CD4-positive, alpha-beta memory T cell (primary cell): ENCODE measurements at regions of chr22 and their contacts with region 1.

Region 1: DNA sequence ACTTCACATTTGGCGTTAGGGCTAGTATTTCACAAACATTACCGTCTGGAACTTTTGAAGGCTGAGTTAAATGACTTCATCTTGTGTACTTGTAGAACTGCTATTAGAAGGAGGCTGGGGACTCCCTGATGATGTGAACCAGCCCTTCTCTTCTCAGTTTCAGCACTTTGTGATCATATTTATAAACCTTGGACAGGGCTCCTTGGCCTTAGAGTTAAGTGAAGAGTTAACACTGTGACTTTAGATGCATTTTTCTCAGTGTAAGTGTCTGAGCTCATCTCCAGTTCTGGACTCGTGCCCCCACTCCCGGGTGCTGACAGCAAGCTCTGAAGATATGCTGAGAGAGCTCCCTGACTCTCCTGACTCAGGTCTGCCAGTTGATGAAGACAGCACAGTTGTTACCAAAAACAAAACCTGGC is 8.4 kb downstream of the MIAT start:
- DNase-seq: no peak
- H3K4me3 ChIP-seq: no peak overlapping the region
- H3K4me3 Mint-ChIP-seq: peak overlapping the region in 1 of 8 donors; percentile 83
- H3K27ac ChIP-seq: peak overlapping the region; percentile 58
- H3K27ac Mint-ChIP-seq: peak overlapping the region; percentile 65 to 93 (median 88)
- H3K4me1 ChIP-seq: peaks cover 46% of the 10 kb centered on the region
- H3K4me1 Mint-ChIP-seq: peaks cover 29 to 57% (median 42%) of the 10 kb centered on the region in 4 donors
- H3K27me3 ChIP-seq: no peaks in the 10 kb centered on the region
- H3K27me3 Mint-ChIP-seq: no peaks in the 10 kb centered on the region

Region 2: GRCh38 chr22:25509374-25509791 is 1156.4 kb before region 1 on chr22:
- CTCF ChIA-PET with region 1: no interaction called
- POLR2A ChIA-PET with region 1: no interaction called
- intact Hi-C with region 1: no loop called
- DNase-seq: no peak
- H3K4me3 ChIP-seq: no peak overlapping the region
- H3K4me3 Mint-ChIP-seq: no peak overlapping the region
- H3K27ac ChIP-seq: no peak overlapping the region
- H3K27ac Mint-ChIP-seq: no peak overlapping the region
- H3K4me1 ChIP-seq: no peaks in the 10 kb centered on the region
- H3K4me1 Mint-ChIP-seq: no peaks in the 10 kb centered on the region
- H3K27me3 ChIP-seq: no peaks in the 10 kb centered on the region
- H3K27me3 Mint-ChIP-seq: no peaks in the 10 kb centered on the region

Region 3: DNA sequence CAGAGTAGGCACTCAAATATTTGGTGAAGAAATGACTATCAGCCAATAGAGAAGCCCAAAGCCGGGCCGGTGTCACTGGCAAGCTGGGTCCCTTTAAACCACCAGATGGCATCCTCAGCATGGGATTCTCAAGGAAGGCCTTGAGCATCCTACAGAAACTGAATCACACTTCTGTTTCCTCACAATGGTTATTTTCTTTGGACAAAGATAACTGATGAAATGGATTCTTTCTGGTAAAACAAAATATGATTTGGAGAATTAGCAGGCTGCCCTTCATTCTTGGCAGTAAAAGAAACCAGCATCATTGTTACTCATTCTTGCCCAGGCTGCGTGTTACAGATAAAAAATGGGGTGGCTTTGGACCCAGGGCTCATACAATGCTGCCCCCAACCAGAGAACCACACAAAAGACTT is 267.1 kb before region 1 on chr22:
- CTCF ChIA-PET with region 1: interaction called, 8 read pairs
- POLR2A ChIA-PET with region 1: no interaction called
- intact Hi-C with region 1: loop called (anchors 1 kb)
- DNase-seq: peak; percentile 36 to 56 (median 46)
- H3K4me3 ChIP-seq: no peak overlapping the region
- H3K4me3 Mint-ChIP-seq: no peak overlapping the region
- H3K27ac ChIP-seq: no peak overlapping the region
- H3K27ac Mint-ChIP-seq: no peak overlapping the region
- H3K4me1 ChIP-seq: no peaks in the 10 kb centered on the region
- H3K4me1 Mint-ChIP-seq: no peaks in the 10 kb centered on the region
- H3K27me3 ChIP-seq: no peaks in the 10 kb centered on the region
- H3K27me3 Mint-ChIP-seq: peaks cover 5 to 6% of the 10 kb centered on the region in 2 donors

Region 4: GRCh38 chr22:26502688-26503561 is 162.9 kb before region 1 on chr22:
- CTCF ChIA-PET with region 1: interaction called, 32 read pairs
- POLR2A ChIA-PET with region 1: interaction called, 6 read pairs
- intact Hi-C with region 1: loop called (anchors 1 kb)
- DNase-seq: peak; percentile 57 to 69 (median 65)
- H3K4me3 ChIP-seq: no peak overlapping the region
- H3K4me3 Mint-ChIP-seq: peak overlapping the region in 7 of 8 donors; percentile 13 to 76 (median 49)
- H3K27ac ChIP-seq: no peak overlapping the region
- H3K27ac Mint-ChIP-seq: peak overlapping the region; percentile 57 to 93 (median 79)
- H3K4me1 ChIP-seq: peaks cover 22% of the 10 kb centered on the region
- H3K4me1 Mint-ChIP-seq: peaks cover 17 to 27% (median 23%) of the 10 kb centered on the region in 4 donors
- H3K27me3 ChIP-seq: no peaks in the 10 kb centered on the region
- H3K27me3 Mint-ChIP-seq: no peaks in the 10 kb centered on the region

Region 5: DNA sequence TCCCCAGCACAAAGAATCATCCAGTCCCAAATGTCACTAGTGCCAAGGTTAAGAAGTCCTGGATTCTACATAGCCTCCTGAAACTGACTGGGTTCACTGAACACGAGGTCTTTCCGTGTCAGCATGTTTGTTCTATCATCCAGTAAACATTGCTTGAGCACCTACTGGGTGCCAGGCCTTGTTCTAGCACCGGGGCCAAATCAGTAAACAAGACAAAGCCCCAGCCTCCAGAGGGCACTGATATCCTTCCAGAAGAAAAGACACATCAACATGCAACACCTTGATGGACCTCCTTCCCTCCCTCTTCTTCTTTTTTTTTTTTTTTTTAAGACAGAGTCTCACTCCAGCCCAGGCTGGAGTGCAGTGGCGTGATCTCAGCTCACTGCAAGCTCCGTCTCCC is 102.8 kb before region 1 on chr22:
- CTCF ChIA-PET with region 1: interaction called, 6 read pairs
- POLR2A ChIA-PET with region 1: no interaction called
- intact Hi-C with region 1: loop called (anchors 1 kb)
- DNase-seq: peak in 1 of 5 donors; percentile 21
- H3K4me3 ChIP-seq: no peak overlapping the region
- H3K4me3 Mint-ChIP-seq: no peak overlapping the region
- H3K27ac ChIP-seq: no peak overlapping the region
- H3K27ac Mint-ChIP-seq: peak overlapping the region in 3 of 7 donors; percentile 51 to 82 (median 72)
- H3K4me1 ChIP-seq: peaks cover 13% of the 10 kb centered on the region
- H3K4me1 Mint-ChIP-seq: peaks cover 7 to 39% (median 24%) of the 10 kb centered on the region in 4 donors
- H3K27me3 ChIP-seq: no peaks in the 10 kb centered on the region
- H3K27me3 Mint-ChIP-seq: no peaks in the 10 kb centered on the region

Region 6: GRCh38 chr22:26599505-26599904 is 66.3 kb before region 1 on chr22:
- CTCF ChIA-PET with region 1: no interaction called
- POLR2A ChIA-PET with region 1: no interaction called
- intact Hi-C with region 1: no loop called
- DNase-seq: no peak
- H3K4me3 ChIP-seq: no peak overlapping the region
- H3K4me3 Mint-ChIP-seq: no peak overlapping the region
- H3K27ac ChIP-seq: no peak overlapping the region
- H3K27ac Mint-ChIP-seq: no peak overlapping the region
- H3K4me1 ChIP-seq: peaks cover 4% of the 10 kb centered on the region
- H3K4me1 Mint-ChIP-seq: peaks cover 0 to 11% (median 4%) of the 10 kb centered on the region in 4 donors
- H3K27me3 ChIP-seq: no peaks in the 10 kb centered on the region
- H3K27me3 Mint-ChIP-seq: no peaks in the 10 kb centered on the region

Region 7: DNA sequence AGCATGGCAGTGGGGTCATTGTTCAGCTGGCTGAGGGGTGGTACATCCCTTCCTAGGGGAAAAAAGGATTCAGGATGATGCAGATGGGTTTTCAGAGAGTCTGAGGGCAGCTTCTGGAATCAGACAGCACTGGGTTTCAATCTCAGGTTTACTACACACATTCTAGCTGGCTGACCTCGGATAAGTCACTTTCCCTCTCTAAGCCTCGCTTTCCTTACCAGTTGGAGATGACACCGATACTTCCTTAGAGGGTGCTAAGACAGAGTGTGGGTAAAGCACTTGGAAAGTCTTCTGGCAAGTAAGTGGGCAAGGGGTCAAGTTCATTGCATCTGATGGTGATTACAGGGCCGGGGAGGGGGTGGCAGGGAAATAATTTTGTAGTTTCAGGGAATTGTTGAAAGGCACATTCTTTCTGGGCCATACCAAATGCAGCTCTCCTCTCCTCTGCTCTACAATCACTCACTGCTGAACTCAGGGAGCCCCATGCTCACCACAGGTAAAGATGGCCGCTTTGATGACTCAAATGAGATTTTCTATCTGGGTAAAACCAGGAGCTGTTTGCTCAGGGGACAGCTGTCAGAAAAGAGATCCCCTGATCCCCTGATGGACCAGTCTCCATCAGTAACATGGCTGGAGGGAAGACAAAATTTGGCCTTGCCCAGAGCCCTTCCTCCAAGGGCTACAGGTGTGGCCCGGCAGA is 14.9 kb before region 1 on chr22:
- CTCF ChIA-PET with region 1: no interaction called
- POLR2A ChIA-PET with region 1: no interaction called
- intact Hi-C with region 1: no loop called
- DNase-seq: no peak
- H3K4me3 ChIP-seq: no peak overlapping the region
- H3K4me3 Mint-ChIP-seq: peak overlapping the region in 1 of 8 donors; percentile 32
- H3K27ac ChIP-seq: no peak overlapping the region
- H3K27ac Mint-ChIP-seq: peak overlapping the region in 3 of 7 donors; percentile 2 to 74 (median 50)
- H3K4me1 ChIP-seq: peaks cover 37% of the 10 kb centered on the region
- H3K4me1 Mint-ChIP-seq: peaks cover 26 to 41% (median 31%) of the 10 kb centered on the region in 4 donors
- H3K27me3 ChIP-seq: no peaks in the 10 kb centered on the region
- H3K27me3 Mint-ChIP-seq: no peaks in the 10 kb centered on the region

Region 8: GRCh38 chr22:26922806-26923205 is 257.0 kb after region 1 on chr22:
- CTCF ChIA-PET with region 1: no interaction called
- POLR2A ChIA-PET with region 1: no interaction called
- intact Hi-C with region 1: no loop called
- DNase-seq: no peak
- H3K4me3 ChIP-seq: no peak overlapping the region
- H3K4me3 Mint-ChIP-seq: no peak overlapping the region
- H3K27ac ChIP-seq: no peak overlapping the region
- H3K27ac Mint-ChIP-seq: no peak overlapping the region
- H3K4me1 ChIP-seq: no peaks in the 10 kb centered on the region
- H3K4me1 Mint-ChIP-seq: no peaks in the 10 kb centered on the region
- H3K27me3 ChIP-seq: no peaks in the 10 kb centered on the region
- H3K27me3 Mint-ChIP-seq: peaks cover 0 to 2% of the 10 kb centered on the region in 2 donors